A549 (cell line): ENCODE measurements at regions of chr12 and their contacts with region 1.

Region 1: DNA sequence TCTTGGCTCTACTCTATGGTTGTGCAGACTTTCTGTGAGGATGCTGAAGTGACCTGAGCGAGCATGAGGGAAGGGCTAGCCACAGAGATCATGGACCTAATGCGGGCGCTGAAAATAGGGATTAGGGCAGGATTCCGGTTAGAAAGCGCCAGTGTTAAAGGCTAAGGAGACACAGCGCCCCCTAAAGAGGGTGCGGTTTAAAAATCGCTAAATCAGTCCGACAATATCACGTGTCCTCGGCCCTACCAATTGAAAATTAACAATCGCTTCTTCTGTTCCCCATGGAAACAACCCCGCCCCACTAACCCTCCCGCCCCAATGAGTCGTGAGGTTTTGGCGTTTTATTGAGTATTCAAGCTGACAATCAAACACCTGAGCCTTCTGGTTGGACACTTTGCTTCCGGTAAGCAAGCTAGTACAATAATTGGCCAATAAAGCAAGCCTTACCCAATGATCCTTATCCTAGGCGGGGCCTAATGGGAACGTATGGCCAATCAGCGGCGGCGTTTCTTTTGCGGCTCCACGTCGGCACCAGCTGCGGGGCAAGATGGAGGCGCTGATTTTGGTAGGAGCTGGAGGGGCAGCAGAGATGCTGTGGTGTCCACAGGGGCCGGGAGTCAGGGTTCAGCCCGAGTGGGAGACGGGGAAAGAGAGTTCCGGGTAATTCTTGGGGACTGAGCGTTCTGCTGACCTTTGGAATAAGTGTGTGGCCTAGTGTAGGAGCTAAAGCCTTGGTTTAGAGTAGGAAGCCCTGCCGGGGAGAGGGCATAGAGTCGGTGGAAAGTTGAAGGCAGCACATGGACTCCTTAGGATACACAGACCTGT is at the start of gene COPZ1:
- DNase-seq: peak; percentile 98 to 100
- ATAC-seq: peak; percentile 97 to 98
- H3K4me3 ChIP-seq: peak within 1 kb of the TSS; percentile 74
- H3K27ac ChIP-seq: peak within 1 kb of the TSS; percentile 85 to 91
- H3K4me1 ChIP-seq: peaks cover 40% of the 10 kb centered on the region
- CTCF ChIP-seq: peak; percentile 96
- EP300 ChIP-seq: no peak
- POLR2A ChIP-seq: peak; percentile 87
- RAD21 ChIP-seq: peak; percentile 79 to 81
- polyA plus RNA-seq, gene COPZ1: 590 and 613 TPM in 2 replicates

Region 2: DNA sequence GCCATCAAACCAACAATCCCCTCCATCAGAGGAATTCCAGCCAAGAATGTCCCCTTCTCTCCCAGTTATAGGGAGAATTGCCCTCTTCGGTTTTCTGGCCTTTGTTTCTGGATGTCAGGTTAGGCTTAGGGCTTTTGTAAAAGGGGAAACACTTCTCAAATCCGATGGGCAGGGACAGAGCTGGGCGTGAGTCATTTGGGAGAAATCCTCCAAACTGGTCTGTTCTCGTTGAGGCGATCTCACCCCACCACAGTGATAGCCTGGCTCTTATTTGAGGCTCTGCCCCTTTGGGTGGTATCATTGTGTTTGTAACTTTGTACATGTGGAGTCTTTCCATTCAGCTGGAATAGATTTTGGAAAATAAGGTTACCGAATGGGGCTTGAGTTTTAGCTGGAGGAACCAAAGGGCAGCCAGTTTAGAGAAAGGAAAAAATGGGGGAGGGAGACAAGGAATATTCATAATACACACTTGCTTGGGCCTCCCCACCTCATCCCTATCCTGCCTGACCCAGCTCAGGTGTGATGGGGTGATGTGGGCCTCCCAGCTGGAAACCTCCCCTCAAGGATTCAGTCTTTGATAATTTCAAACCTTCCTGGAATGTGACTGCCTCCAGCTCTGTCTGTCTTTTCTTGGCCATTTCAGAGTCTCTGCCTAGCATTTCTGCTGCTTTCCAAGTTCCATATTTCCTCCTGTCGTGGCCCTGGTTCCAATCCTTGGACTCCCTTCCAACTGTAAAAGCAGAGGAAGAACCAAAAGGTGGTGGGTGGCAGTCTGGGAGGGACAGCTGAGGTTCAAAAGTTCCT is 263.7 kb before region 1 on chr12:
- CTCF ChIA-PET with region 1: no interaction called
- POLR2A ChIA-PET with region 1: no interaction called
- DNase-seq: no peak
- ATAC-seq: no peak
- H3K4me3 ChIP-seq: no peak overlapping the region
- H3K27ac ChIP-seq: no peak overlapping the region
- H3K4me1 ChIP-seq: no peaks in the 10 kb centered on the region
- CTCF ChIP-seq: no peak
- EP300 ChIP-seq: no peak
- POLR2A ChIP-seq: no peak
- RAD21 ChIP-seq: no peak

Region 3: GRCh38 chr12:54279866-54280467 is 44.9 kb before region 1 on chr12 and contains the start of gene CBX5:
- CTCF ChIA-PET with region 1: interaction called, 38 read pairs
- POLR2A ChIA-PET with region 1: interaction called, 40 read pairs
- DNase-seq: peak; percentile 98 to 100
- ATAC-seq: peak; percentile 55 to 65
- H3K4me3 ChIP-seq: peak within 1 kb of the TSS; percentile 88
- H3K27ac ChIP-seq: peak within 1 kb of the TSS; percentile 87 to 96
- H3K4me1 ChIP-seq: peaks cover 22% of the 10 kb centered on the region
- CTCF ChIP-seq: no peak
- EP300 ChIP-seq: no peak
- POLR2A ChIP-seq: peak; percentile 84
- RAD21 ChIP-seq: no peak
- polyA plus RNA-seq, gene CBX5: 115 and 129 TPM in 2 replicates

Region 4: GRCh38 chr12:54294152-54294952 is 30.5 kb before region 1 on chr12:
- CTCF ChIA-PET with region 1: interaction called, 86 read pairs
- POLR2A ChIA-PET with region 1: no interaction called
- DNase-seq: peak; percentile 68 to 83
- ATAC-seq: peak; percentile 31 to 51; a peak in 4 of 6 replicates
- H3K4me3 ChIP-seq: no peak overlapping the region
- H3K27ac ChIP-seq: no peak overlapping the region
- H3K4me1 ChIP-seq: no peaks in the 10 kb centered on the region
- CTCF ChIP-seq: peak; percentile 67
- EP300 ChIP-seq: no peak
- POLR2A ChIP-seq: no peak
- RAD21 ChIP-seq: peak; percentile 64 to 82

Region 5: GRCh38 chr12:54306925-54307741 is 17.7 kb before region 1 on chr12:
- CTCF ChIA-PET with region 1: interaction called, 11 read pairs
- POLR2A ChIA-PET with region 1: interaction called, 3 read pairs
- DNase-seq: peak; percentile 59 to 91
- ATAC-seq: peak; percentile 83 to 87
- H3K4me3 ChIP-seq: no peak overlapping the region
- H3K27ac ChIP-seq: peak overlapping the region; percentile 37 to 57; a peak in 4 of 6 replicates
- H3K4me1 ChIP-seq: peaks cover 25% of the 10 kb centered on the region
- CTCF ChIP-seq: no peak
- EP300 ChIP-seq: no peak
- POLR2A ChIP-seq: no peak
- RAD21 ChIP-seq: no peak

Region 6: GRCh38 chr12:54359033-54359761 is 34.4 kb after region 1 on chr12:
- CTCF ChIA-PET with region 1: interaction called, 12 read pairs
- POLR2A ChIA-PET with region 1: interaction called, 11 read pairs
- DNase-seq: peak; percentile 99 to 100
- ATAC-seq: peak; percentile 80 to 92
- H3K4me3 ChIP-seq: peak overlapping the region; percentile 54
- H3K27ac ChIP-seq: peak overlapping the region; percentile 81 to 91
- H3K4me1 ChIP-seq: peaks cover 28% of the 10 kb centered on the region
- CTCF ChIP-seq: no peak
- EP300 ChIP-seq: no peak
- POLR2A ChIP-seq: peak; percentile 38; the same call in 1 of the 2 replicates
- RAD21 ChIP-seq: no peak

Region 7: DNA sequence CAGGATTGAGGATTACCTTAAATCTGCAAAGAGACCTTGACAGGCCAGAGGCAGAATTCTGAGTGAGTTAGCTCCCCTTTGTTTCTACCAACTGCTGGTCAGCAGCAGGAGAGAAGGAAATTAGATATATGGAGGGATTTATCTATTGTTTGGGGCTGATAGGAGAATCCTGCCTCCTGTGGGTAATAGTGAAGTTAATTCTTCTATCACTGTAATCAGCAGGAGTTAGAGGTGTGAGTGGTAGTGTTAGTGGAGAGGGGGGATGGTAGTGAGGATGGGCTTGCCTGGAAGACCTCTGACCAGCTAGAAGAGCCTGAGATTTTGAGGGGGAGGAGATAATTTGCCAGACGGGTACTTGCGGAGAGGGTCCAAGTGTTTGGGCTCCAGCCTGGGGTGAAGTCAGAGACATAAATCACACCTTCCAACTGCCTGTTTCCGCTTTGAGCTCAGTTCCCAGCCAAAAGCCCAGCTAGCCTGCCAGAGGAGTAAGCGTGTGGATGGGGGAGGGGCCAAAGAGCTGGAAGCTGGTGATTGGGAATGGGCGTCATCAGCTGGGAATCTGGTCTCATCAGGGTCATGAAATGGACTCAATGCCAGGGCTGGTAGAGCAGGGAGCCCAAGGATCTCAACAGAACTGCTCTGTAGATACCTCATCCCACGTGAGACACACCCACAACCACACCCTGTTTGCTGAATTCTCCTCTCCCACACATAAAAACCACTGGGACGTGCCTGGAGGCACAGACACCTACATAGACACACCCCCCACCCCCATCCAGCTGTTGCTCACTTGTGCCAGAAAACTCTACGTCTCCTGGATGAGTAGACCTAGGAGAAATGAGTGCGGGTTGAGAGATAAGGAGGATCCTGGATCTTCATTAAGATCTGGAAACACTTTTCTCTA is 107.3 kb after region 1 on chr12:
- CTCF ChIA-PET with region 1: no interaction called
- POLR2A ChIA-PET with region 1: no interaction called
- DNase-seq: peak in 1 of 2 experiments; percentile 70
- ATAC-seq: peak; percentile 26 to 48; a peak in 3 of 6 replicates
- H3K4me3 ChIP-seq: no peak overlapping the region
- H3K27ac ChIP-seq: peak overlapping the region in 1 of 2 experiments; percentile 18; a peak in 1 of 6 replicates
- H3K4me1 ChIP-seq: peaks cover 34% of the 10 kb centered on the region
- CTCF ChIP-seq: no peak
- EP300 ChIP-seq: no peak
- POLR2A ChIP-seq: no peak
- RAD21 ChIP-seq: no peak